Activated T-helper 1 cell treated with anti-CD3 and anti-CD28 coated beads, Interleukin-12 subunit alpha, Interleukin-12 subunit beta, Interleukin-2, Interleukin-4 antibody, amounts not matched to agents 30 ng/mL and 10 ng/mL and 1 ng/mL, durations not matched to agents 14 hours and 24 hours and 36 hours (primary cell): ENCODE measurements at regions of chr22 and their contacts with region 1.

Region 1: GRCh38 chr22:35299673-35300497 is at the start of gene TOM1:
- DNase-seq: peak; percentile 95
- H3K4me3 Mint-ChIP-seq: peak within 1 kb of the TSS; percentile 91
- H3K27ac Mint-ChIP-seq: peak within 1 kb of the TSS; percentile 97
- H3K4me1 Mint-ChIP-seq: peaks cover 30% of the 10 kb centered on the region
- H3K27me3 Mint-ChIP-seq: peaks cover 7% of the 10 kb centered on the region
- total RNA-seq, gene TOM1: 16.8 and 19.0 TPM in 2 replicates

Region 2: GRCh38 chr22:35257321-35258190 is 42.3 kb before region 1 on chr22 and contains the start of gene HMGXB4:
- intact Hi-C with region 1: loop called (anchors 1 kb)
- DNase-seq: peak; percentile 82
- H3K4me3 Mint-ChIP-seq: peak within 1 kb of the TSS; percentile 91
- H3K27ac Mint-ChIP-seq: peak within 1 kb of the TSS; percentile 94
- H3K4me1 Mint-ChIP-seq: peaks cover 26% of the 10 kb centered on the region
- H3K27me3 Mint-ChIP-seq: no peaks in the 10 kb centered on the region
- total RNA-seq, gene HMGXB4: 45.7 and 47.9 TPM in 2 replicates